Lower leg skin (tissue), 4 donors: ENCODE measurements at regions of chr20 and their contacts with region 1.

Region 1: DNA sequence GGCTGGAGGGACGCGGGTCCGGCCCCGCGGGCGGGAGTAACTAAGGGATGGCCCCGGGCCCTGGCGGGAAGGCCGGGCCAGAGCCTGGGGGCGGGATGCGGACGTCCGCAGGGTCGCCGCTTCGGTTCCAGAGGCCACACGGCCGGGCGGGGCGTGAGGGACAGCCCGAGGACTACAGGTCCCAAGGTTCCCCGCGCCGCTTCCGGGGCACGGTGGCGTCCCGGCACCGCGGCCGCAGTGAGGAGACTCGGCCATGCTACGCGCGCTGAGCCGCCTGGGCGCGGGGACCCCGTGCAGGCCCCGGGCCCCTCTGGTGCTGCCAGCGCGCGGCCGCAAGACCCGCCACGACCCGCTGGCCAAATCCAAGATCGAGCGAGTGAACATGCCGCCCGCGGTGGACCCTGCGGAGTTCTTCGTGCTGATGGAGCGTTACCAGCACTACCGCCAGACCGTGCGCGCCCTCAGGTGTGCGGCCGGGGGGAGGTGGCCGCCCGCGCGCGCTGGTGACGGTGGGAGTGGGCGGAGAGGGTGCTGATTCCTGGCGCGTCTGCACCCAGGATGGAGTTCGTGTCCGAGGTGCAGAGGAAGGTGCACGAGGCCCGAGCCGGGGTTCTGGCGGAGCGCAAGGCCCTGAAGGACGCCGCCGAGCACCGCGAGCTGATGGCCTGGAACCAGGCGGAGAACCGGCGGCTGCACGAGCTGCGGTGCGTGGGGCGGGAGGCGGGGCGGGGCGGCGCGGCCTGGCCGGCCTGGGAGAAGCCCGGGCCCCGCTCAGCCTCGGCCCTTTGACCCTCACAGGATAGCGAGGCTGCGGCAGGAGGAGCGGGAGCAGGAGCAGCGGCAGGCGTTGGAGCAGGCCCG is at the start of gene MRPS26:
- DNase-seq: peak; percentile 80 to 96
- H3K4me3 ChIP-seq: peak within 1 kb of the TSS; percentile 62
- CTCF ChIP-seq: no peak
- POLR2A ChIP-seq: no peak
- total RNA-seq, gene MRPS26: 71.5 to 86.4 (median 76.5) TPM

Region 2: DNA sequence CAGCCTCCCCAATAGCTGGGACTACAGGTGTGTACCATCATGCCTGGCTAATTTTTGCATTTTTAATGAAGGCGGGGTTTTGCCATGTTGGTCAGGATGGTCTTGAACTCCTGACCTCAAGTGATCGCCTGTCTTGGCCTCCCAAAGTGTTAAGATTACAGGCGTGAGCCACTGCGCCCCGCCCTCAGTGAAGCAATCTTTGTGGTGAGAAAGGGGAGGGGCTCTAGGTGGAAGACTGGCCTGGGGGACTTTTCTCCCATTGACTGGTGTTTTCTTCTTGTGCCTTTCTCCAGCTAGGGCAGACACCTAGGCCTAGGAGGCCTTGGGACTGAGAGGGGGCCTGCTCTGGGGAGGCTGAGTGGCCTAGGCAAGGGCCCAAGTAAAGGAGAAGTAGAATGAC is 277.4 kb after region 1 on chr20:
- intact Hi-C with region 1: loop called (anchors 10 kb)
- DNase-seq: no peak
- H3K4me3 ChIP-seq: no peak overlapping the region
- CTCF ChIP-seq: no peak
- POLR2A ChIP-seq: no peak

Region 3: GRCh38 chr20:3603108-3603507 is 557.1 kb after region 1 on chr20:
- intact Hi-C with region 1: no loop called
- DNase-seq: no peak
- H3K4me3 ChIP-seq: no peak overlapping the region
- CTCF ChIP-seq: no peak
- POLR2A ChIP-seq: no peak